Dorsolateral prefrontal cortex (tissue), 120 donors: ENCODE measurements at regions of chr10 and their contacts with region 1.

Region 1: DNA sequence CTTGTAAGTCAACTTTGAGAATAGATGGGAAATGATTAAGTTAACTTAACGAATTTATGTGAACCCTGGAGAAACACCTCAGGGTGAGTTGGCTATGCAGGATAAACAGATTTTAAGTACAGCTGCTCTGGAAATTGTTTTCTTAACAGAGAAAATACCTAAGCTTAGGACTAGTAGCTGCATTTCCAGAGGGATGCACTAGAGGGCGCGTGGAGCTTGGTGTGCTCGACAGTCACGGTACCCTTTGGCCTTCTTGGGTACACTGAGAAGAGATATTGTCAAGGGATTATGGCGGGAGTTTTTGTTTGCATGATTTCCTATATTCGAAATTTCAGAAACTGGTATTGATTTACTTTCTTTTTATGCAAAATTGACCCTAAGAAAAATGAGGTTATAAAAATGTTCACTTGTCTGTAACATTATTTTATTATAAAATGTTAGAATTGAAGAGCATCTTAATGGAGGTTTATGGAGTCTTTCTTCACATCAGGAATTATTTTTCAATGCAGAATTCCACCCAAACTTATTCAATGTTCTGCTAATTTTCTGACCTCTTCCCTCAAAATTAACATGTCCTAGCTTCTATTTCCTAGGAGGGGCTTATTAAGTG is 58.4 kb upstream of the MYO3A start:
- DNase-seq: peak; percentile 37 to 86 (median 69)
- H3K4me3 ChIP-seq: no peak overlapping the region
- H3K27ac ChIP-seq: no peak overlapping the region
- H3K27me3 ChIP-seq: peaks cover 0 to 7% (median 0%) of the 10 kb centered on the region in 45 donors
- CTCF ChIP-seq: peak; percentile 66 to 94 (median 82)

Region 2: DNA sequence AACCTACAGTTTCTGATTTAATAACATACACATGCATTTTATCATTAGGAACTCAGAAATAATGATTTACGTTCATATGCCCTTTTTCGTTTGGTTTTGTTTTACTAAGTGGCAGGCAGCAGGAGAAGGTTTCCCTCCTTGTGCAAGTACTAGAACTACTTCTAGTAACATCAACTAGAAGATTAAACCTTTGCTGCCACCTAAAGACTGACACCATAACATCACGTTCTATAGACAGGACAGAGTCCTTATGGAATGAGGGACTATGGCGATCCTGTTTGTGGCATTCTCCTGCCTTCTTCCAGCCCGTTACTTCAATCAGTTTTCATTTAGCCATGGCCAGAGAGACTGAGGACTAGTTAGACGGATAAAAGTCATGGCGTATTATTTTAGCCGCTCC is 394.1 kb after region 1 on chr10:
- intact Hi-C with region 1: loop called in 1 of 2 experiments (anchors 10 kb)
- DNase-seq: no peak
- H3K4me3 ChIP-seq: no peak overlapping the region
- H3K27ac ChIP-seq: no peak overlapping the region
- H3K27me3 ChIP-seq: peaks cover 0 to 44% (median 7%) of the 10 kb centered on the region in 45 donors
- CTCF ChIP-seq: peak in 36 of 56 donors; percentile 4 to 54 (median 33)